Posterior vena cava (tissue), 2 donors: ENCODE measurements at regions of chr4 and their contacts with region 1.

Region 1: GRCh38 chr4:65437102-65437501 is 233.2 kb downstream of the EPHA5 start:
- DNase-seq: no peak

Region 2: DNA sequence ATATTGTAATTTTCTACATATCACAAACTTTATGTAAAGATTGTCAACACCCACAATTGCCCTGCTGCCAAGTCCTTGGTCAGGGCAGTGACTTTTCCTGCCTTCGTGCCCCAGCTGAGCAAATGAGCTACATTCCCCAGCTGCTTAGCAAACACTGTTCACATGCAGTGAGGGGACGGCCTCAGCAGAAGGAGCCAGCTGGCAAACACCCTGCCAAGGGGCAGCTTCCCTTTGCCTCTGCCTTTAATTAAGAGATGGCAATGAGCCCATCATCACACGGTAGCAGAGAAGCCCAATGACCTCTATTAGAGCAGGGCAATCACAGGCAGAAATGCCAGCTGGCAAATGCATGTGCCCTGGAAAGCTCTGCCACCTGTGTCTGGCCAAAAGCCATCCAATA is 20.2 kb before region 1 on chr4:
- intact Hi-C with region 1: loop called in 1 of 2 experiments (anchors 2 kb)
- DNase-seq: no peak

Region 3: DNA sequence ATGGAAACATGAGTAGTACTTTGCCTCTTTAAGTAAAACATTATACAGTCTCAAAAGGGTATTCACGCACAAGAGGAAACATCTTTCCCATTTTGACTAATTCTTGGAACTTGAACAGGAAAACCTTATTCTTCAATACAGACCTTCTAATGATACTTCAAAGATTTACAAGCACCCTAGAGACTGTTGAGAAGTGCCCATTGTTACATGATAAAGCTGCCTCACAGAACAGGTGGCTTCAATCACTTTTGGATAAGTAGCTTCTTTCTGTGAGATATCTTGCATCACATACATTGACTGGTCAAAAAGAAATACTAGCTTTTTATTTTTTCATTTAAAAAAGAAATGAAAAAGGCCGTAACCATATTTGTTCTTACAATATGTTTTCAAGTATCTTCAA is 13.8 kb after region 1 on chr4:
- intact Hi-C with region 1: no loop called
- DNase-seq: no peak

Region 4: DNA sequence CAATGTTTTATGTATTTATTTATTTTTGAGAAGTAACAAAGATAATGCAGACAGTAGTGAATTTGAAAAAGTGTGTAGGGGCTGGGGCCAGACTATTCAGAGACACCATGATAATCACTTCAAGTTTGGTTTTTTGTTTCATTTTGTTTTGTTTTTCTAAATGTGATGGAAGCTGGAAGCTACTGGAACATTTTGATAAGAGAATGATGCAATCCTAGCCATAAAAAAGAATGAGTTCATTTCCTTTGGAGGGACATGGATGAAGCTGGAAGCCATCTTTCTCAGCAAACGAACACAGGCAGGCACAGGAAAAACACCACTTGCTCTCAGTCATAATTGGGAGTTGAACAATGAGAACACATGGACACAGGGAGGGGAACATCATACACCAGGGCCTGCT is 939.8 kb after region 1 on chr4:
- intact Hi-C with region 1: loop called in 1 of 2 experiments (anchors 5 kb)
- DNase-seq: no peak